Calu3 (cell line): ENCODE measurements at regions of chr1 and their contacts with region 1.

Region 1: GRCh38 chr1:156608036-156608674 is 6.9 kb upstream of the GPATCH4 start:
- DNase-seq: peak; percentile 64
- H3K4me3 Mint-ChIP-seq: no peak overlapping the region
- H3K27ac Mint-ChIP-seq: no peak overlapping the region
- H3K4me1 Mint-ChIP-seq: peaks cover 23% of the 10 kb centered on the region
- H3K27me3 Mint-ChIP-seq: no peaks in the 10 kb centered on the region
- CTCF ChIP-seq: peak; percentile 50

Region 2: DNA sequence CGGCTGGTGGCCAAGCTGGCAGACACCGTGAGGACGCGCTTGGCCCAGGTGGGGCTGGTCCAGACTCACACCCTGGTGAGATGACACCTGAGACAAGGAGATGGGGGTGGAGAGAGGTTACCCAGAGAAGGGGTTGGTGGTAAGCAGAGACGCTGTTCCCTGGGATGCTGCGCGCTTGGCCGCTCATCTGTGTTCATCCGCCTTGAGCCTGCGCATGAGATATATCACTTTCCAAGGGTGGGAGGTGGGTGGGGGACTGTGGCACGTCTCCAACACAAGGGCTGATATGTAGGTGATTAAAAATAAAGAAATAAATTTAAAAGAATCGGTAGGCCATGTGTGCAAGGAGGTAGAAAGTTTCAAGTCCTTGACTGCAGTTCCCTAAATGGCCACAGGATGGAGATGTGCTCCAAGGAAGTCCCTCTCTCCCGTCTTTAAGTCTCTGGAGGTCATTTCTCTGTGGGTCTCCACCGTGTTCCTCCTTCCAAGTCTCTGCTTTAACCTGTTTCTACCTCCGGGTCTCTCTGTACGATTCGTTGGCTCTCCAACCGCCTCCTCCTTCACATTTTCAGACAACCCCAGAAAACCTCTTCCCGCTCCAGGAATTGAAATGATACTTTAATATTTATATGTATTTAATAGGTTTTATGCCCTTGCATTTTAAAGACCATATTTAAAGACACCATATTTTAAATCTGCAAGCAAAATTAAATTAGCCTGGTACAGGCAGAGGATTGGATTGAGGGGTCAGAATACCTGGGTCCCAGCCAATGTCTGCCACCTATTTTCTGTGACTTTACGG is 24.1 kb before region 1 on chr1:
- CTCF ChIA-PET with region 1: interaction called, 5 read pairs
- intact Hi-C with region 1: loop called (anchors 1 kb)
- DNase-seq: peak; percentile 82
- H3K4me3 Mint-ChIP-seq: no peak overlapping the region
- H3K27ac Mint-ChIP-seq: no peak overlapping the region
- H3K4me1 Mint-ChIP-seq: no peaks in the 10 kb centered on the region
- H3K27me3 Mint-ChIP-seq: no peaks in the 10 kb centered on the region
- CTCF ChIP-seq: peak; percentile 82

Region 3: GRCh38 chr1:156797212-156797871 is 189.2 kb after region 1 on chr1:
- CTCF ChIA-PET with region 1: no interaction called
- intact Hi-C with region 1: no loop called
- DNase-seq: peak; percentile 69
- H3K4me3 Mint-ChIP-seq: no peak overlapping the region
- H3K27ac Mint-ChIP-seq: no peak overlapping the region
- H3K4me1 Mint-ChIP-seq: no peaks in the 10 kb centered on the region
- H3K27me3 Mint-ChIP-seq: no peaks in the 10 kb centered on the region
- CTCF ChIP-seq: peak; percentile 81

Region 4: DNA sequence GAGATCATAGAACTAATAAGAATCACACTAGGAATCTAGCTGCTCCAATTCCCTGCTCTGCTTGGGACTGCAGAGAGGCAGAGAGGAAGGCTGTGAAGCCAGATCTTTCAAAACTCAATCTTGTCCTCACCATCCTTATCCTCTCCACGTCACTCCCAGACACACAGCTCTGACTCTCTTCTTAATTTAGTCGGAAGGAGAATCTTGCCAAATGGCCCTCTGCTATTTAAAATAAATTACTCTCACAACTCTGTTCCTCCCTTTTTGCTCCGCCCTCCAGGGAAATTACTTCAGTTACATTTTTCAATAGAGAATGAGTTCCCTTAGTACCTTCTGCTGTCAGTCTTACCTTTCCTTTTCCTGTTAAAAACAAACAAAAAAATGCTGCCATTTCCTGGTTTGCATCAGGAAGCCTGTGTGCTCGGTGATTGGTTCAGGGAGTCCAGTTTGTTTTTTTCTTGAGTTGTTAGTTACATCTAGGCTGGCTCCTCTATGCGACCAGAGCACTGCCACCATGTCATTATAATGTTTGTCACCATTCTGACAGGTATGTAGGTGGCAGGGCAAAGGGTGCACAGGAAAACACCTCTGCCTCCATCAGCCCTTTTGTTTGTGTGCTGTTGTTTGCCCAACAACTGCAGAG is 864.0 kb after region 1 on chr1:
- CTCF ChIA-PET with region 1: no interaction called
- intact Hi-C with region 1: no loop called
- DNase-seq: no peak
- H3K4me3 Mint-ChIP-seq: no peak overlapping the region
- H3K27ac Mint-ChIP-seq: no peak overlapping the region
- H3K4me1 Mint-ChIP-seq: no peaks in the 10 kb centered on the region
- H3K27me3 Mint-ChIP-seq: no peaks in the 10 kb centered on the region
- CTCF ChIP-seq: no peak